PC-3 (cell line): ENCODE measurements at regions of chr14 and their contacts with region 1.

Region 1: GRCh38 chr14:65302571-65303189 is 109.8 kb upstream of the FUT8 start:
- DNase-seq: peak; percentile 80
- ATAC-seq: peak; percentile 31
- H3K4me3 ChIP-seq: peak overlapping the region; percentile 18; the same call in 1 of the 2 replicates
- H3K27ac ChIP-seq: peak overlapping the region; percentile 94
- H3K4me1 ChIP-seq: peaks cover 58% of the 10 kb centered on the region
- H3K27me3 ChIP-seq: no peaks in the 10 kb centered on the region
- CTCF ChIP-seq: no peak

Region 2: GRCh38 chr14:65170768-65171507 is 131.7 kb before region 1 on chr14:
- CTCF ChIA-PET with region 1: interaction called, 3 read pairs
- POLR2A ChIA-PET with region 1: interaction called, 5 read pairs
- intact Hi-C with region 1: loop called (anchors 2 kb)
- DNase-seq: peak; percentile 80
- ATAC-seq: peak; percentile 86
- H3K4me3 ChIP-seq: peak overlapping the region; percentile 65
- H3K27ac ChIP-seq: peak overlapping the region; percentile 56
- H3K4me1 ChIP-seq: peaks cover 18% of the 10 kb centered on the region
- H3K27me3 ChIP-seq: no peaks in the 10 kb centered on the region
- CTCF ChIP-seq: peak; percentile 76

Region 3: GRCh38 chr14:65255536-65256461 is 46.9 kb before region 1 on chr14:
- CTCF ChIA-PET with region 1: interaction called, 8 read pairs
- POLR2A ChIA-PET with region 1: interaction called, 3 read pairs
- intact Hi-C with region 1: loop called (anchors 2 kb)
- DNase-seq: peak; percentile 95
- ATAC-seq: peak; percentile 62
- H3K4me3 ChIP-seq: peak overlapping the region; percentile 34
- H3K27ac ChIP-seq: peak overlapping the region; percentile 96
- H3K4me1 ChIP-seq: peaks cover 58% of the 10 kb centered on the region
- H3K27me3 ChIP-seq: no peaks in the 10 kb centered on the region
- CTCF ChIP-seq: no peak

Region 4: GRCh38 chr14:65321370-65321875 is 18.7 kb after region 1 on chr14:
- CTCF ChIA-PET with region 1: interaction called, 8 read pairs
- POLR2A ChIA-PET with region 1: interaction called, 29 read pairs
- intact Hi-C with region 1: loop called (anchors 1 kb)
- DNase-seq: peak; percentile 98
- ATAC-seq: peak; percentile 92
- H3K4me3 ChIP-seq: no peak overlapping the region
- H3K27ac ChIP-seq: peak overlapping the region; percentile 99
- H3K4me1 ChIP-seq: peaks cover 45% of the 10 kb centered on the region
- H3K27me3 ChIP-seq: no peaks in the 10 kb centered on the region
- CTCF ChIP-seq: no peak

Region 5: DNA sequence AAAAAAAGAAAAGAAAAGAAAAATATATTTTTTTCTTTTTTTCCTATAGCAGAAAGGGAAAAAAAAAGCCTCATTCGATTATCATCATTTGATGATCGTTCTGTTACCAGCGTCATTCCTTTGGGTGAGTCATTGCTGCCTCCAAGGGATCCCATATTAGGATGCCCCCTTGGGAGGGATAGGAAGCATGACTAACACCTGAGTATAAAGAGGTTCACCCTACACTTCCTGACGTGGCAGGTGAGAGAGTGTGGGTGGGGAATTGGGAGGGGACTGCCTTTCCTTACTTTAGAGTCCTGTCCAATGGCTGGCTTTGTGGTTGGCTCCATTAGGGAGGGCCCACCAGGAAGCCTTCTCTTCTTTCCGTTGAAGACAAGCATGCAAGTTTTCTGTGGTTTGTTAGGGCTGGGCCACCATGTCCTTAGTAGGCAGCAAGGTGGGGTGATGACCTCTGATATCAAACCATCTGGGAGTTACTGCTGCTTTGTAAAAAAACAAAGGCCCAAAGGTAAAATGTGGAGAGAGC is 53.7 kb after region 1 on chr14:
- CTCF ChIA-PET with region 1: interaction called, 5 read pairs
- POLR2A ChIA-PET with region 1: interaction called, 6 read pairs
- intact Hi-C with region 1: loop called (anchors 1 kb)
- DNase-seq: peak; percentile 100
- ATAC-seq: peak; percentile 83
- H3K4me3 ChIP-seq: peak overlapping the region; percentile 13; the same call in 1 of the 2 replicates
- H3K27ac ChIP-seq: peak overlapping the region; percentile 97
- H3K4me1 ChIP-seq: peaks cover 68% of the 10 kb centered on the region
- H3K27me3 ChIP-seq: no peaks in the 10 kb centered on the region
- CTCF ChIP-seq: no peak